Astrocyte of the cerebellum (primary cell): ENCODE measurements at regions of chr16 and their contacts with region 1.

Region 1: DNA sequence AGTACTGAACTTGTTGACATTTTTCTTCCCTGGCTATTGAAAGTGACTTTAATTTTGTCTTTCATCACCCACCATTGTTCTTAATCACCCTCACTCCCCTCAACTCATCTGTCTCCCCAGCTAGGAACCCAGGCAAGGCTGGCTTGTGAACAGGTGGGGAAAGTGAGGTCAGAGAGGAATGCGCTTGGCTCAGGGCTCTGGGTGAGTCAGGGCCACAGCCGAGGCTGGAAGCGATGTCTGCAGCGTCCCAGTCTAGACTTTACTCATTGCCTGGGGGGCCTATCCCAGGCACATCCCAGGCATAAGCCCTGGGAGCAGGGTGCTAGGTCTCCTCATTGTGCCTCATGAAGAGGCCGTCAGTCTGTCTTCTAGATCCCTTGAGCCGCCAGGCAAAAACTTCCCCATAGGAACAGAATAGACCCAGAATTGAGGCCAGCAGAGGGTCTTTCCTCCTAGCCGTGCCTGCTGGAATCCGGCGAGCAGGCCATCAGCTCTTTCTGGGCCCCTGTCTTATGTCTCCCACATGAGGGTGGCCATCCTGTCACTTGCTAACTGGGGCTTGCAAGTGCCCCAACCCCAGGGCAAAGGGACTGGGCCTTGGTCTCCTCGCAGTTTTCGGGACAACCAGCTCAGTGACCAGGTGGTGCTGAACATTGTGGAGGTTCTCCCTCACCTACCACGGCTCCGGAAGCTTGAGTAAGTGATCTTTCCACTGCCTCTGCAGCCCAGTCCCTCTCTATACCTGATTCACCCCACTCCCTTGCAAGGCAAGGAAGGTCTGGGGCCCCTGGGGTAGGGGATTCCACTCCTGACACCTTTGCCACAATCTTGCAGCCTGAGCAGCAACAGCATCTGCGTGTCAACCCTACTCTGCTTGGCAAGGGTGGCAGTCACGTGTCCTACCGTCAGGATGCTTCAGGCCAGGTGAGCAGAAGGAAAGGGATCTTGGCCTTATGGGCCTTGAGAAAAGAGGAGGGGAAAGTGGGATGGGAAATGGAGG is 40.1 kb downstream of the NLRC5 start:
- DNase-seq: peak; percentile 34
- H3K4me3 ChIP-seq: no peak overlapping the region
- CTCF ChIP-seq: no peak

Region 2: GRCh38 chr16:56950881-56951771 is 78.3 kb before region 1 on chr16:
- in situ Hi-C with region 1: loop called (anchors 5 kb)
- DNase-seq: no peak
- H3K4me3 ChIP-seq: no peak overlapping the region
- CTCF ChIP-seq: peak; percentile 71

Region 3: DNA sequence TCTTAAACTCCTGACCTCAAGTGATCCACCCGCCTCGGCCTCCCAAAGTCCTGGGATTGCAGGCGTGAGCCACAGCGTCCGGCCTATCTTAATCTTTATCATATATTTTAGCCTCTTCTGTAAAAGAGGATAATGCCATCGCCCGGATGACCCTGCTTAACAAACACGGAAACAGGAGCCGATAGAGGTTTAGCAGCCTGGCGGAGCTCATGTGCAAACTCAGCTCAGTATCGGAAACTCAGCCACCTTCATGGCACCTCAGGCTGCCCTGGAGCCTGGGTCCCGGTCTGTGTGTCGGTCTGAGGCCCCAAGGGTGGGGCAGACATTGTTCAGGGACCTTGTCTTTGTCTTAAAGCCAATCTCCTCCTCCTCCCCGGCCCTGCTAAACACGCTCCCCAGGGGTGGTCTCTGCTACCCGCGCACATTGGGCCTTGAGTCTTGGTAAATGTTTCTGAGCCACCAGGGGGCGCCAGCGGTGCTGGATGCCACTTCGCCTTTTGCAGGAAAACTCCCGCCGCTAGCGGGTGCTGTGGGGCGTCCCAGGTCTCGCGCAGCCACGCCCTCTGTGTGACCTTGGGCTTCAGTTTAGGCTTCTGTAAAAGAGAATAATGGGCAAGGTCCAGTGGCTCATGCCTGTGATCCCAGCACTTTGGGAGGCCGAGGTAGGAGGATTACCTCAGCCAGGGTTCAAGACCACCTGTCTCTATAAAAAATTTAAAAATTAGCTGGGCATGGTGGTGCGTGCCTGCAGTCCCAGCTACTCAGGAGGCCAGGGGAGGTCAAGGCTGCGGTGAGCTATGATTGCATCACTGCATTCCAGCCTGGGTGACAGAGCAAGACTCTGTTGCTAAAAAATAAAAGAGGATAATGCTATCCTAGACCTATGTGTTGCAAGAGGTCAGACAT is 65.0 kb before region 1 on chr16:
- in situ Hi-C with region 1: no loop called
- DNase-seq: no peak
- H3K4me3 ChIP-seq: no peak overlapping the region
- CTCF ChIP-seq: peak; percentile 77